ENCODE measurements at regions of chr6 and their contacts with region 1.

Region 1: GRCh38 chr6:148530394-148530953 is 187.8 kb downstream of the SASH1 start:
- DNase-seq: no peak
- H3K4me3 ChIP-seq: peak overlapping the region; percentile 29 to 40
- H3K27ac ChIP-seq: peak overlapping the region; percentile 53 to 80
- H3K4me1 ChIP-seq: peaks cover 0 to 42% (median 2%) of the 10 kb centered on the region in 4 donors
- H3K27me3 ChIP-seq: no peaks in the 10 kb centered on the region
- CTCF ChIP-seq: no peak

Region 2: GRCh38 chr6:148263010-148263409 is 267.5 kb before region 1 on chr6:
- intact Hi-C with region 1: loop called (anchors 10 kb)
- DNase-seq: no peak
- H3K4me3 ChIP-seq: no peak overlapping the region
- H3K27ac ChIP-seq: no peak overlapping the region
- H3K4me1 ChIP-seq: peaks cover 0 to 10% (median under 1%) of the 10 kb centered on the region in 4 donors
- H3K27me3 ChIP-seq: no peaks in the 10 kb centered on the region
- CTCF ChIP-seq: no peak

Region 3: DNA sequence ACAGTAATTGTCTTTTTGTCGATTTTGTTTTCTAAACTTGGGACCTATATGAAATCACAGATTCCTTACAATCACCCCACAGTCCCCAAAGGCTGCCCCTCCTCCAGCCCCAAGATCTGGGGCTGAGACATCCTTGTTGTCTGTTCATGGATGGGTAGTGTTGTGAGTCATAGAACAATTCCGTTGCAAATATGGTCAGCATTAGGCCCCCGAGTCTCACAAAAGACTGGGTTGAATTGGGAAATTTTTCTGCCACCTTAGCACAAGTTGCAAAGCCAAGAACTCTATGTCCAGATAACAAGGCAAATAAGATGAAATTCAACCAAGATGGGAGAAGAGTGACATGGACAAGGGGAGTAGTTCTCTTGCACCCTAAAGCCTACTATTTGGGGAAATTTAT is 776.5 kb after region 1 on chr6:
- intact Hi-C with region 1: no loop called
- DNase-seq: no peak
- H3K4me3 ChIP-seq: no peak overlapping the region
- H3K27ac ChIP-seq: no peak overlapping the region
- H3K4me1 ChIP-seq: no peaks in the 10 kb centered on the region
- H3K27me3 ChIP-seq: no peaks in the 10 kb centered on the region
- CTCF ChIP-seq: no peak

Measured in tibial artery (tissue), 4 donors.